ENCODE measurements at regions of chr2 and their contacts with region 1.

Region 1: DNA sequence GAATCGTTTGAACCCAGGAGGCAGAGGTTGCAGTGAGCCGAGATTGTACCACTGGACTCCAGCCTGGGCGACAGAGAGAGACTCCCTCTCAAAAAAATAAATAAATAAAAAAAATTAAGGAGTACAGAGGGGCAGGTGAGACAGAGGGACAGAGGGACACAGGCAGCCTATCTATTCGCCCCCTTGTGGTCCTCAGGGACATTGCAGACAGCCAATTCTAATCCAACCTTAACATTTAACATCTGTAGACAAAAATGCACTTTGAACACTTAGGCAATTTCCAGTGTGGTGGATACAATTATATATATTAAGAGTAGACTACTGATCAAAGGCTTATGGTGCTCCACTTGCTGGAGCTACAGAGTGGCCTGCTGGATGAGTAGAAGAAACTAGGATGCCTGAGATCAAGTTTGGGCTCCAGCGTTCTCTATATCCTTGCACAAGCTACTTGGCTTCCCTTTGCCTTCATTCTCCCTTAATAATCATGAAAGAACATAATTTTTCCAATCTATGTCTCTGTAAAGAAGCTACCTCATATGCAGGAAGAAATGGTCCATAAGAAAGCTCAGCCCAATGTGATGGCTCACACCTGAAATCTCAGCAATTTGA is 8.2 kb upstream of the SMARCAL1 start:
- DNase-seq: no peak
- H3K4me3 ChIP-seq: no peak overlapping the region
- CTCF ChIP-seq: peak; percentile 78

Region 2: GRCh38 chr2:216108967-216109921 is 294.9 kb before region 1 on chr2 and contains the start of gene XRCC5:
- CTCF ChIA-PET with region 1: interaction called, 34 read pairs
- POLR2A ChIA-PET with region 1: no interaction called
- DNase-seq: peak; percentile 76
- H3K4me3 ChIP-seq: peak within 1 kb of the TSS; percentile 94
- CTCF ChIP-seq: no peak

Region 3: DNA sequence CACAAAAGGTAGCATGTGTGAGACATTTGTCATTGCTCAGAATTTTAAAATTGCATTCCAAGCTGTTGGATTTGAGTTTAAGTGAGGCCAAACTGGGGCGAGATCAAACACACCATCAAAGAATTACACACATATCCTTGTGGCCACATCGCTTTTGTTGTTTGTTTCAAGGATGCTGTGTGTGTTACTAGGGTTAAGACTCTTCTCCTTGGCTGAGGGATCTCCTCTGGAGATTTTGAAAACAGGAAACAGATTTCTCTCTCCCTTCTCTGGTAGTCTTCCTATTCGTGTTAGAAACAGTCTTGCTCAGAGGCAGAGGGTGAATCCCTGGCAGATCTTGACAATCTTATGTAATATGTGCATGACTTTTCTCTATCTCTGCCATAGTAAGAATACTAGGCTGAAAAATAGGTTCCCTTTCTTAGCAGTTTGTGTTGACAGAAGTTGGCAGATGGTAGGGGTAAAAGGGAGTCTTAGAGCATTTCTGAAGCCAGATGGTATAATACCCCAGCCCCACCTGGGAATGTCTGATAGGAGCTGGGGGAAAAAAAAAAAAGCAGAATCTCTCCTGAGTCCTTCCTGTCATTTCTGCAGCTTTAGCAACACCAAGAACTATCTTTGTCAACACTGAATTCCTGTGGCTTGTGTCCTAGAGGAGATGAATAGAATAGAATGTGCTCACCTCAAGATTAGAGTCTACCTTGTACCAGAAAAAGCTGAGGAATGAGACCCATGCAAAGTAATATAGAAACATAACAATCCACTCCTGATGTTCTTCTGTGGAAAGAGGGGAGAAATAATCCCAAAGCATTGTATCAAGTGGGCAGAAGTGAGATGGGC is 193.2 kb before region 1 on chr2:
- CTCF ChIA-PET with region 1: interaction called, 11 read pairs
- POLR2A ChIA-PET with region 1: no interaction called
- DNase-seq: no peak
- H3K4me3 ChIP-seq: no peak overlapping the region
- CTCF ChIP-seq: no peak

Region 4: DNA sequence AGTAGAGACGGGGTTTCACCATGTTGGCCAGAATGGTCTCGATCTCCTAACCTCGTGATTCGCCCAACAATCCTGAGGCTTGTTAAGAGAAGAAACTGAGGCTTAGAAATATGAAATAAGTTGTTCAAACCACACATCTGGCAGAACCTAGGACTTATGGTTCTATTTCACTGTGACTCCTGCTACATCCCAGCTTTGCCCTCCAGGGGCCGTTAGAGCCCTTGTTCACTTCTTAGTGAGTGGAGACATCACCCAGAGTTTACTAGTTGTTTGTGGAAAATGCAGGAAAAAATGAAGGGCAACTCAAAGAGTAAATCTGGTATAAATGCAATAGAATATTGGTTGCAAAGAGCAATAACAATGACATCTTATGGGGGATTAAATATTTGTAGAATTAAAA is 75.8 kb before region 1 on chr2:
- CTCF ChIA-PET with region 1: interaction called, 12 read pairs
- POLR2A ChIA-PET with region 1: no interaction called
- DNase-seq: no peak
- H3K4me3 ChIP-seq: no peak overlapping the region
- CTCF ChIP-seq: peak; percentile 37

Region 5: DNA sequence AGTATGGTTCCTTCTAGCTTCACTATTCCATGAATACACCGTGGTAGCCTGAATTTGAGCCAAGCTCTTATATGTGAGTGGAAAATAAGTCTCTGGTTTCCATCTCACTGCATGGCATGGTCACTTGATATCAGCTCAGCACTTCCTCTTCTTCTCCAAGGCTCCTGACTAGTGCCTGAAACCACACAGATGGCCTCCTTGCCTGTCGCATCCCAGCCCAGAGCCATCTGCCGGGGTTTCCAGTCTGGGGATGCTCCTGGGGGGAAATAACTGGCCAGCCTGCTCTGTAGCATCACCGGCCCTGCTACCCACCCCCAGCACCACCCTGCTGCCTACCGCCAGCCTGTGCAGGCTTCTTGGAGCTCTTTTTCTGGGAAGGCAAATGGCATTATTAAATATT is 24.1 kb before region 1 on chr2:
- CTCF ChIA-PET with region 1: interaction called, 25 read pairs
- POLR2A ChIA-PET with region 1: no interaction called
- DNase-seq: no peak
- H3K4me3 ChIP-seq: no peak overlapping the region
- CTCF ChIP-seq: no peak

Region 6: GRCh38 chr2:216420367-216421101 is 16.4 kb after region 1 on chr2:
- CTCF ChIA-PET with region 1: interaction called, 29 read pairs
- POLR2A ChIA-PET with region 1: no interaction called
- DNase-seq: no peak
- H3K4me3 ChIP-seq: no peak overlapping the region
- CTCF ChIP-seq: no peak